ENCODE measurements at regions of chr1 and their contacts with region 1.

Region 1: GRCh38 chr1:38005195-38006007 is at the start of gene FHL3:
- DNase-seq: peak in 1 of 2 experiments; percentile 76
- H3K4me3 ChIP-seq: peak within 1 kb of the TSS; percentile 68
- H3K27ac ChIP-seq: no peak within 1 kb of the TSS
- H3K4me1 ChIP-seq: peaks cover 24% of the 10 kb centered on the region
- H3K27me3 ChIP-seq: no peaks in the 10 kb centered on the region
- CTCF ChIP-seq: no peak
- total RNA-seq, gene FHL3: 26.2 and 29.8 TPM in 2 replicates

Region 2: GRCh38 chr1:38243106-38243505 is 237.7 kb after region 1 on chr1:
- CTCF ChIA-PET with region 1: no interaction called
- POLR2A ChIA-PET with region 1: no interaction called
- intact Hi-C with region 1: no loop called
- DNase-seq: peak in 1 of 2 experiments; percentile 31
- H3K4me3 ChIP-seq: no peak overlapping the region
- H3K27ac ChIP-seq: no peak overlapping the region
- H3K4me1 ChIP-seq: no peaks in the 10 kb centered on the region; the same call in 1 of the 2 replicates
- H3K27me3 ChIP-seq: peaks cover 22% of the 10 kb centered on the region
- CTCF ChIP-seq: no peak

Region 3: GRCh38 chr1:39391691-39392679 is 1386.6 kb after region 1 on chr1:
- CTCF ChIA-PET with region 1: no interaction called
- POLR2A ChIA-PET with region 1: interaction called, 22 read pairs
- intact Hi-C with region 1: no loop called
- DNase-seq: peak; percentile 31 to 72
- H3K4me3 ChIP-seq: peak overlapping the region; percentile 25
- H3K27ac ChIP-seq: peak overlapping the region; percentile 79
- H3K4me1 ChIP-seq: peaks cover 74% of the 10 kb centered on the region
- H3K27me3 ChIP-seq: no peaks in the 10 kb centered on the region
- CTCF ChIP-seq: no peak

Measured in PC-9 (cell line).